Ascending aorta (tissue), 2 donors: ENCODE measurements at regions of chr4 and their contacts with region 1.

Region 1: DNA sequence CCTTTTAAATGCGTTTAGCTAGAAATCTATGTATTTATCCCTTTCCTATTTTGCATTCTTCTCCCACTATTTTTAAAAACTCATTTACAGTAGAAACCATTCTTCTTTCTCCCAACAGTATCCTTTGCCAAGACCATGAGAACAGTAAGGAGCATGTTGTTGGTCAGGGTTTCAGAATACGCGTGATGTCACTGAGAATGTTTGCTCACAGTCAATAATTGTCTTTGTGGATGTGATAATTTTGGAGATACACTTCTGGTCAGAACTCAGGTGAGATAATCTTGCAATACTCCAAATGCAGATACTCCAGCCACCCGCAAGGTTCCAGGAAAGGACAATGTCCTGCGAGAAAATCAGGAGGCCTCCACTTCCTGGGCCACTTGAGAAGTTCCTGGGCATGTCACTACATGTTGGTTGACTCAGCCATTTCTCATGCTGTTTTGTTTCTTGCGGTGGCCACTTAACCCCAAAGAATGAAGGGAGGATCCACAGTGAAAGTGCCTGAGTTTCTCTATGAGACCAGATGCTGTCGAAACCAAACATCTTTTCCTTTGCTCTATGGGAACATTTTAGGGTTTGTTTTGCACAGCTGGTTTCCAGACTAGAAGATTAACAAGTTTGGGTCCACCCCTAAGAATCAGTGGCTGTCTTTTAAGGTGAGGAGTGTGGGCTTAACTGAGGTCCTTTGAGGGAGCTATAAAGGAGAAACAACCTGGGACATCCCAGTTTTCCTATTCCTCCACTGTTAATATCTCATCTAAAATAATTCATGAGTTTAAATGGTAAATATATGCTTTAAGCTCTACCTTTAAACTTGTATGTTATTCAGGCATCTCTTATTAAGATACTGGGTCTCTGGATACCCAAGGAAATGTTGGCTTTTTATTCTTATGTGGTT is 116.0 kb downstream of the SOWAHB start:
- DNase-seq: no peak
- H3K4me3 ChIP-seq: no peak overlapping the region
- H3K27ac ChIP-seq: no peak overlapping the region
- H3K4me1 ChIP-seq: no peaks in the 10 kb centered on the region
- H3K27me3 ChIP-seq: no peaks in the 10 kb centered on the region
- CTCF ChIP-seq: no peak

Region 2: GRCh38 chr4:77036206-77036605 is 254.3 kb after region 1 on chr4:
- intact Hi-C with region 1: loop called (anchors 10 kb)
- DNase-seq: no peak
- H3K4me3 ChIP-seq: no peak overlapping the region
- H3K27ac ChIP-seq: no peak overlapping the region
- H3K4me1 ChIP-seq: no peaks in the 10 kb centered on the region
- H3K27me3 ChIP-seq: no peaks in the 10 kb centered on the region
- CTCF ChIP-seq: no peak